WTC11 (cell line): ENCODE measurements at regions of chr3 and their contacts with region 1.

Region 1: GRCh38 chr3:18559331-18559842 is 134.2 kb upstream of the SATB1 start:
- DNase-seq: peak; percentile 34
- ATAC-seq: peak; percentile 97
- H3K4me3 Mint-ChIP-seq: no peak overlapping the region
- H3K27ac Mint-ChIP-seq: no peak overlapping the region
- H3K4me1 Mint-ChIP-seq: peaks cover 23% of the 10 kb centered on the region
- H3K27me3 Mint-ChIP-seq: no peaks in the 10 kb centered on the region
- CTCF ChIP-seq: peak; percentile 80

Region 2: GRCh38 chr3:18444595-18445400 is 114.6 kb before region 1 on chr3:
- CTCF ChIA-PET with region 1: interaction called, 10 read pairs
- POLR2A ChIA-PET with region 1: no interaction called
- DNase-seq: peak; percentile 71
- ATAC-seq: peak; percentile 80
- H3K4me3 Mint-ChIP-seq: peak overlapping the region; percentile 95
- H3K27ac Mint-ChIP-seq: no peak overlapping the region
- H3K4me1 Mint-ChIP-seq: peaks cover 32% of the 10 kb centered on the region
- H3K27me3 Mint-ChIP-seq: peaks cover 12% of the 10 kb centered on the region
- CTCF ChIP-seq: no peak

Region 3: DNA sequence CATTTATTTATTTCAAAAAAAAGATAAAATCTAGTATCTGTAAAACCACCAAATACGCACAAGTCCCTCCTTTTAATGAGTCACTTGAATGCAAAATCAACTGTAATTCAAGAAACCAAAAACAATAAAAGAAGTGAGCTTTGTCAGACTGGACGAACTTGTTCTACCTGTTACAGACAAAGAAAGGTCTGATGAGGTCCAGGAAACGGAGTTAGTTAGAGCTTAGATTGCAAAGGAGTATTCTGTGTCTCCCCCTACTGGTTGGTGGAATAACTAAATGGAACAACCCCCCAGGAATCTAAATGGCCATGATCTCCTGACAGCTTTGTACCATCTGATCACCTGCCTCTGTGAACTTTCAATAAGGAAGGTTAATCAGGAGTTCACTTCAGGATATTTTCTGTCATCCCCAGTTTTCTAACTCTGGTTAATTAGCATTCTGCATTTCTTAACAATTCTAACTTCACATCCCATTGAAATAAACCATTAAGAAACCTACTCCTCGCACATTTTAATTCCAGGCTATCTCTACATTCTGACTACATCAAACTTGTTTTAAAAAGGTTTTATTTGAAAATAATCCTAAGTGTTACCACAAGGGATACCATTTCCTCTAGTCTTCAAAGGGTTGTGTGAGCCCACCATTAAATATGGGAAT is 198.8 kb after region 1 on chr3:
- CTCF ChIA-PET with region 1: interaction called, 37 read pairs
- POLR2A ChIA-PET with region 1: interaction called, 9 read pairs
- DNase-seq: no peak
- ATAC-seq: peak; percentile 91
- H3K4me3 Mint-ChIP-seq: no peak overlapping the region
- H3K27ac Mint-ChIP-seq: no peak overlapping the region
- H3K4me1 Mint-ChIP-seq: peaks cover 19% of the 10 kb centered on the region
- H3K27me3 Mint-ChIP-seq: no peaks in the 10 kb centered on the region
- CTCF ChIP-seq: peak; percentile 61

Region 4: DNA sequence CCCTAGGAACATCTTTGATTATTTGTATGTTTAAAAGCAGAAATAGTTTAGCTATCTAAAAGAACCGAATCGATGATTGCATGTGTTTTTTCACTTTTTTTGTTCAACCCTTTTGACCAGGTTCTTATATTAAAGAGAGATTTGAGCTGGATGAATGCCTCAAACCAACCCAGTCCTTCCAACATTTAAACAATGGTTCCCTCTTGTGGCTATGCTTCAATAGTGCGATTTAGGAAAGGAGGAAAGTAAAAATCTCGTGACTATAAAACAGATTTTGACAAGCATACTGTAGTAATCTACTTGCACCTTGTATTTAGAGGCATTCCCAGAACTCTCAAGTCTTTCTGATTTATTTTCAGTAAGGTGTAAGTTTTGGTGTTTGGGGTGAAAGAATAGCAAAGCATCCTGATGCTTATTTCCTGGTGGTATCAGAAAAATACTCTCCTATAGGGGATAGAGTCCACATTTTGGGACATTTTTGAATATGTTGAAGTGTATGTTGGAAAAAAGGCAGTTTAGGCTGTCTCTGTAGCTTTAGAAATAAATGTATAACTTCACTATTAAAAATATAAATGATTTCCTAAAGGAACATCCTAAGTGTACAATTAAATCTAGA is 429.3 kb after region 1 on chr3:
- CTCF ChIA-PET with region 1: interaction called, 24 read pairs
- POLR2A ChIA-PET with region 1: no interaction called
- DNase-seq: no peak
- ATAC-seq: peak; percentile 51
- H3K4me3 Mint-ChIP-seq: no peak overlapping the region
- H3K27ac Mint-ChIP-seq: no peak overlapping the region; the same call in 1 of the 2 replicates
- H3K4me1 Mint-ChIP-seq: peaks cover 75% of the 10 kb centered on the region
- H3K27me3 Mint-ChIP-seq: no peaks in the 10 kb centered on the region
- CTCF ChIP-seq: peak; percentile 38

Region 5: DNA sequence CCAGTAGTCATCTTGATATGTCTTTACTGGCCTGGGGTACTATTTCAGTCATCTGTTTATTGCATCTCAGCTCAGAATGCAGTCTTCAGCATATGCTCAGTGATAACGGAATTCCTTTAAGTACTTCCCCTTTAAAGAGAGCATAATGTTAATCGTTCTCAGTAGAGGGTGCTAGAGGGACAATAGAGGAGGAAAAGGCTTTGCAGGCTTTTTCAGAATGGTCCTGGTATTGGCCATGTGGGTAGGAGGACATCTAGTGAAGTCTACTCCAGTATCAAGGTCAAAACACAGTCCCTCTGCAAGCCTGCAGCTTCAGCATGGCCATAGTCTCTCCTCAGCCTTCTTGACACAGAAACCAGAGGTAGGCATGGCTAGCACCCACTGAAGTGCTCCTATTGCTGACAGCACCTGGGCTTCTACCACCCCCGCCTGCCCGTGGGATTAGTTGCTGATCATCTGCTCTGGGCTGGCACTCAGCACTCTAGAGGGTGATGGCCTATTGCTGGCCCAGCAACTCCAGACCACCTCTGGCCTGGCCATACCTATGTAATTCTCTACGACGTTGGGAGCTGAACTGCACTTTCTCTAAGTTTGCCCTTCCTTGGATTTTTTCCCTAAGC is 654.3 kb after region 1 on chr3:
- CTCF ChIA-PET with region 1: no interaction called
- POLR2A ChIA-PET with region 1: no interaction called
- DNase-seq: no peak
- ATAC-seq: peak; percentile 96
- H3K4me3 Mint-ChIP-seq: no peak overlapping the region
- H3K27ac Mint-ChIP-seq: no peak overlapping the region
- H3K4me1 Mint-ChIP-seq: peaks cover 8% of the 10 kb centered on the region
- H3K27me3 Mint-ChIP-seq: no peaks in the 10 kb centered on the region
- CTCF ChIP-seq: no peak